ENCODE measurements at regions of chr2 and their contacts with region 1.

Region 1: DNA sequence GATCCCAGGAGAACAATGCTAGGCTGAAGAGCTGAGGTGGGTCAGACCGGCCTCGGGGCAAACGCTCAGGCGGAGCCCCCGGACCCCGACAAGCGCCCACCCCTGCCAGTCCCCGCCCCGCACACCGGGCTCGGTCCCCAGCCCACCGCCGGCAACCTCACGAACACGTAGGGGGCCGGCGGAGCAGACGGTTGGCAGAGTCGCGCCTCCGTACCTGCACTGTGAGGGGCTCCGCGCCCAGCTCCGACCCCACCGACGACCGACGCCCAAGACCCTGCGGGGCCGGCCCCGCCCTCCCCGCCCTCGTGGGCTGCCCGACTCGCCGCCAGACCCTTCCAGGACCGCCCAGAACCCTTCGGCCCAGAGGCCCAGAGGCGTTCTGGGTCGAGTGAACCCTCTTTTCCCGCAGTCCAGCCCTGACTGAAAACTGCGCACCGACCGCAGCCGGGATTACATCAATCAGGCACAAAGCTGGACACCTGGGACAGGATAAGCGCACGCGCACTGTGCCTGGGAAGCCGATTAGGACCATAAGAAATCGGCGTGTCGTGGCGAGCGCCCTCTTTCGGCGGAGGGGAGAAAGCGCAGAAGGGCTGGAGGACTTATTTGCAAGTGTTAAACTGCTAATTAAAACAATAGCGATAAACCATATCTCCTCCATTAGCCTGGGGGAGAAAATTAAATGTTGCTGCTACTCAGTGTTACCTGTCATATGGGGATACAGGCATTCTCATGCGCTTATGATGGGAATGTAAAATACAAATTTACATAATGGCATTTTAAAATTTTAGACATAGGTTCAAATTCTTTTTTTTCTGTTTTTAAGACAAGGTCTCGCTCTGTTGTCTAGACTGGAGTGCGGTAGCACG is 11.7 kb upstream of the DCTN1 start:
- DNase-seq: peak; percentile 55 to 93
- H3K4me3 ChIP-seq: peak overlapping the region; percentile 92 to 94
- H3K27ac ChIP-seq: peak overlapping the region; percentile 84 to 89
- H3K4me1 ChIP-seq: peaks cover 13 to 21% of the 10 kb centered on the region in 2 donors
- H3K27me3 ChIP-seq: no peaks in the 10 kb centered on the region
- CTCF ChIP-seq: peak; percentile 88 to 97 (median 94)

Region 2: GRCh38 chr2:74374509-74375205 is 17.2 kb before region 1 on chr2:
- intact Hi-C with region 1: loop called (anchors 2 kb)
- DNase-seq: peak; percentile 54 to 85
- H3K4me3 ChIP-seq: peak overlapping the region; percentile 34 to 49
- H3K27ac ChIP-seq: peak overlapping the region; percentile 33 to 48
- H3K4me1 ChIP-seq: peaks cover 3 to 19% of the 10 kb centered on the region in 2 donors
- H3K27me3 ChIP-seq: no peaks in the 10 kb centered on the region
- CTCF ChIP-seq: no peak

Region 3: GRCh38 chr2:74488644-74489481 is 97.0 kb after region 1 on chr2:
- intact Hi-C with region 1: no loop called
- DNase-seq: no peak
- H3K4me3 ChIP-seq: no peak overlapping the region
- H3K27ac ChIP-seq: no peak overlapping the region
- H3K4me1 ChIP-seq: peaks cover 0 to 2% of the 10 kb centered on the region in 2 donors
- H3K27me3 ChIP-seq: no peaks in the 10 kb centered on the region
- CTCF ChIP-seq: no peak

Region 4: DNA sequence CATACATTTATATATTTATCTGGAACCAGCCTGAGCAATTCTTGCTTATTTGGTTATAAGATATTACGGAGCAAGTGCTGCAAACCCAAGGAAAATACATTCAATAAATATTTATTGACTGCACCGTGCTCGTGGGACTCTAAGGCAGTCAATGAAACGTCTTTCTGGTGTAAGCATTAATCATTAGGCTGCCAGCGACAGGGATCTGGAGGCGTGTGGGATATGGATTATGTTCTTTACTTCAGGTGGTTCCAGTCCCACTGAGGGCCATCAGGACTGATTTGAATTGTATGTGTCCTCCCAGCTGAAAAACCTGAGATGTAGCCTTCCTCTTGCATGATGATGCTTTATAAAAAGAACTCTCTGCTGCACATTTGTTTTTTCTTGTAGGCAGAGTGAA is 732.1 kb after region 1 on chr2:
- intact Hi-C with region 1: no loop called
- DNase-seq: no peak
- H3K4me3 ChIP-seq: no peak overlapping the region
- H3K27ac ChIP-seq: no peak overlapping the region
- H3K4me1 ChIP-seq: no peaks in the 10 kb centered on the region
- H3K27me3 ChIP-seq: no peaks in the 10 kb centered on the region
- CTCF ChIP-seq: no peak